GM18951 (cell line): ENCODE measurements at regions of chr4 and their contacts with region 1.

Region 1: GRCh38 chr4:1403591-1404572 is 2.4 kb downstream of the NKX1-1 start:
- POLR2A ChIP-seq: no peak

Region 2: DNA sequence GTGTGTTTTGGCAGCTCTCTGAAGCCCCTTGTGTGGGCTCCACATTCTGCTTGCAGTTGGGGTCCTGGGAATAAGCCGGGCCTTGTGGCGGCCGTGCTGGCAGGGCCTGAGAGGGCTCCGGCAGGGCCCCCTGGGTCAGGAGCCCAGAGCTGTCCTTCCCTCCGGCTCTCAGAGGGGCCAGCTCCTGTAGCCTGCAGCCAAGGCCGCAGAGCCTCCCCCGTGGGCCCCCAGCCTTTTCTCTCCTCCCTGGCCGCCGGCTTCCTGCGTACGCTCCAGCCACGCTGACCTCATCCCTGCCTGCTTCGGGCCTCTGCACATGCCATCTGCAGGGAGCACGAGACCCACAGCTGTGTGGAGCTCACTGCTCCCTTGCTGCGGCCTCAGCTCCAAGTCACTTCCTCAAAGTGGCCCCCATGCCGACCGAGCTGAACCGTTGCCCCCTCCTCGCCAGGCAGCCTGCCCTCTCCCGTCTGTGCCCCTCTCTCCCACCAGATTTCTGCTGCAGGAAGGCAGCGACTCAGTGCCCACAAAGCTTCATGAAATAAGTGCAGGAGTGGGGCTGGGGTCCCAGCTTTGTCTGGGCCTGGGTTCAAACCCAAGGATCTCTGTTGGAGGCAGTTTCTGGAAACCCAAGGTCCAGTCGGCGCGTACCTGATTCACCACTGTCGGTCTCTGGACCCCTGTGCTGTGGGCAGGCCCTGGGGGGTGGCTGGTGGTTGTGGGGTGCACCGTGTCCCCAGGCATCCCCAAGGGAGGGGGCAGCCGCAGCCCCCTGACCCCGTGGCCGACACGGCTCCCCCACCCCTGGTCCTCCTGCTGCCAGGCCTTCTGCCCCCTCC is 59.4 kb after region 1 on chr4:
- in situ Hi-C with region 1: loop called (anchors 10 kb)
- POLR2A ChIP-seq: no peak

Region 3: DNA sequence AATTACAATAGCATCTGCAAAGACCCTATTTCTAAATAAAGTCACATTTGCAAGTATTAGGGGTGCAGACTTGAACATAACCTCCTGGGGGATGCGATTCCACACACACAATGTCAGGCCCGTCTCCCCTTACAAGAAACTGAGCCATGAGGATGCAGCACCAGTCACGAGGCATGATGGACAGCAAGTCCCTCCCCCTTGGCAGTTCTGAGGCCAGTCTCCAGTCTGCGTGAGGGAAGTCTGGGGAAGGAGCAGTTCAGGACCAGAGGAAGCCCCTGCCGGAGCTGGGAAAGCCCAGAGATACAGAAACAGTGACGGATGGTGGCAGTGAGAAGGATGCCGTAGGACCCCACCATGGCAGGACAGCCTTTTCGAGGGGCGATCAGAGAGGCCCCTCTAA is 270.8 kb after region 1 on chr4:
- in situ Hi-C with region 1: no loop called
- POLR2A ChIP-seq: no peak